Heart right ventricle (tissue), 16 donors: ENCODE measurements at regions of chr17 and their contacts with region 1.

Region 1: DNA sequence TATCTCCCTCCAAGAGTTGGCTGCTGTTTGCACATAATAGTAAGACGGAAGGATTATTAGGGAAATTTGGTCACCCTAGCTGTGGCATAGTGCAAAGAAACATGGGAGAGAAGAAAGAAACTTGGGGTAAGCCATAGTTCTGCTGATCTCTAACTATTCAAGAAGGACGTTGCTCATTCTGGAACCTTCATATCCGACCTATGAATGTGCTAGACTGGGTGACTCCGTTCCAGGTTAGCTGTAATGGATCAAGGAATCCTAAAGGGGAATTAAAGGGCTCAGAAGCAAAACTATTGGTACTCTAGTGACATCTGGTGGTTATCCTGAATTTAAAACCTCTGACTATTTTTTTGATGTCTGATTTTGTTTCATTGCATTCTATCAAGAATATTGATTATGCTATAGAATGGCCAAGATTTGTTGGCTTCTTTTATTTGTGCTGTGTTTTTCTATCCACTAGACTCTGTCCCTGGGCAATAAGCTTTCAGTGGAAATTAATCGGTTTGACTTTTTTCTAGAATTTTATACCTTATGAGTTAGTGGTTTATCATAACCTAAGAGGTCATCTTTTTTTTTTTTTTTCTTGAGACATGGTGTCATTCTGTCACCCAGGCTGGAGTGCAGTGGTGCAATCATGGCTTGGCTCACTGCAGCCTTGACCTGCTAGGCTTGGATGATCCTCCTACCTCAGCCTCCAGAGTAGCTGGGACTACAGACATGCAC is 19.5 kb downstream of the PCTP start:
- DNase-seq: no peak
- ATAC-seq: peak; percentile 44 to 79 (median 66)
- H3K4me3 ChIP-seq: no peak overlapping the region
- H3K27ac ChIP-seq: no peak overlapping the region
- H3K4me1 ChIP-seq: peaks cover 0 to 16% (median 15%) of the 10 kb centered on the region in 9 donors
- H3K27me3 ChIP-seq: no peaks in the 10 kb centered on the region
- CTCF ChIP-seq: peak; percentile 47 to 79 (median 67)

Region 2: DNA sequence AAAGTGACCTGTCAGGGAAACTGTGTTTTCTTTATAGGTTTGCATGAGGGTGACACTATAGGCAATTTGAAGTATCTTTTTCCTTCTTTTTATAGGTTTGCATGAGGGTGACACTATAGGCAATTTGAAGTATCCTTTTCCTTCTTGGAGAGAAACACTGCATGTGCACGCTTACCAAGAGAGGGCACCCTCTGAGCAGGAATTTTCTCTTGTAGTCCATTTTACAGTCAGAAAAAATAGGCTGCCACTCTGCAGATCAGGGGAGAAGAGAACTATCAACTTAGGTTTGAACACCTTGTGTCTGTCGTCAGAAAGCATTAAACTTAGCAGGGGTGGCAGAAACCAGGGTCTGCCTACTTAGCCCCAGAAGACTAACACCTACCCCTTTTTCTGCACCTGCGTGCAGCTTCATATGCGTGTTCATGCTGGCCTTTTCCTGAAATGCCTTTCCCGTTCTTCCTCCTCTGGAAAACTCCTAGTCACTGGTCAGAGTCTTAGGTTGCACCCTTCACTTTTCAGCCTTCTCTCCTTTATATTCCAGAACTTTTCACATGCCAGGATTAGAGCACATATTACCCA is 242.7 kb before region 1 on chr17:
- intact Hi-C with region 1: loop called in 9 of 10 experiments (anchors 1 to 5 kb)
- DNase-seq: peak in 1 of 2 donors; percentile 25
- ATAC-seq: peak in 7 of 8 donors; percentile 54 to 89 (median 83)
- H3K4me3 ChIP-seq: no peak overlapping the region
- H3K27ac ChIP-seq: no peak overlapping the region
- H3K4me1 ChIP-seq: peaks cover 0 to 6% (median 0%) of the 10 kb centered on the region in 9 donors
- H3K27me3 ChIP-seq: peaks cover 0 to 9% (median 0%) of the 10 kb centered on the region in 7 donors
- CTCF ChIP-seq: peak; percentile 14 to 71 (median 60)

Region 3: DNA sequence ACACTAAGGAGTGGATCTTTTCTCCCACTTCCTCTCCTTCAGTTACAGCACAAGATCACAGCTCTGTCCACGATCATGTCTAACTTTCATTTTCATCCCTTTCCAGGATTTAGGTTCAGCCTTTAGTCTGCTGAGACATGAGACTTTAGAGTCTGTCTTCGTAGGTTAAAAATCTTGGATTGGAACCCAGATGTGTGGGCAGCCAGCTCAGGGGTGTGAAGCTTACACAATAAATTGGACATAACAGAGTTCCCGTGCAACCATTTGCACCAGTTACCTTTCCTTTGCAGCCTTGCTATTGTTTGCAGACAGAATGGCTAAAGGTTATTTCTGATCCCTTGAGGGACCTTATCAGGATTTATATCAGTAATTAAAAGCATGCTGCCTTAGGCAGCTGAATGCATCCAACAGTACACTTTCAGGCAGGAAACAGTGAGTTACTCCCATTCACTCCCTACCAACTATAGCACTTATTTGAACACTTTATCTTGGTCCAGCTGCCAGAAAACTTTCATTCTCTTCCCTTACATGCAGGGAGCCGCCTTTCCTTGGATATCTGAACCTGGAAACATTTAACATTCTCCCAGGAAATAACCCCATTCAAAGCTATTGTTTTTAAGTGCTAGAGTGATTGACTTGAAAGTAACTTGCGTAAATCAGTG is 134.9 kb before region 1 on chr17:
- intact Hi-C with region 1: loop called in 2 of 10 experiments (anchors 5 to 10 kb)
- DNase-seq: peak in 1 of 2 donors; percentile 14
- ATAC-seq: peak; percentile 57 to 93 (median 81)
- H3K4me3 ChIP-seq: peak overlapping the region in 4 of 10 donors; percentile 13 to 15 (median 14)
- H3K27ac ChIP-seq: peak overlapping the region in 5 of 10 donors; percentile 3 to 67 (median 31)
- H3K4me1 ChIP-seq: peaks cover 3 to 24% (median 19%) of the 10 kb centered on the region in 9 donors
- H3K27me3 ChIP-seq: peaks cover 0 to 40% (median 0%) of the 10 kb centered on the region in 7 donors
- CTCF ChIP-seq: no peak

Region 4: DNA sequence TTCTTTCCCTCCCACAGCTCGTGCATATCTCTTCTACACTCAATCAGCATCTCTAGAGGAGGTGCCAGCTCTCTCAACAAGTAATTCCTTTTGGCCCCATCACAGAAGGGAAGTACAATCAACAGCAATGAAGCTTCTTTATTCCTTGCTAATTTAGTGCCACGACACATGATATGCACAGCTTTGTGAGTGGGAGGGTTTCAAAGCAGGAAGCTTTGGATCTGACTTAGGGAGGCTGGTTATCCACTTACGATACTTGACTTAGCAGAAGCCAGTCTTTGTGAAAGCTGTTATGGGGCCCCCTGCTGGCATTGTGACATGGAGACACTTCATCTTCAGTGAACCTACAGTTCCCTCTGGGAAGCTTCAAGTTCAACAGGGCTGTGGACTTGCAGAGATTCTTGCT is 128.6 kb before region 1 on chr17:
- intact Hi-C with region 1: loop called in 2 of 10 experiments (anchors 5 to 10 kb)
- DNase-seq: peak; percentile 48 to 75
- ATAC-seq: peak in 7 of 8 donors; percentile 58 to 88 (median 80)
- H3K4me3 ChIP-seq: no peak overlapping the region
- H3K27ac ChIP-seq: no peak overlapping the region
- H3K4me1 ChIP-seq: peaks cover 0 to 12% (median 0%) of the 10 kb centered on the region in 9 donors
- H3K27me3 ChIP-seq: peaks cover 0 to 79% (median 10%) of the 10 kb centered on the region in 7 donors
- CTCF ChIP-seq: peak; percentile 35 to 76 (median 65)

Region 5: DNA sequence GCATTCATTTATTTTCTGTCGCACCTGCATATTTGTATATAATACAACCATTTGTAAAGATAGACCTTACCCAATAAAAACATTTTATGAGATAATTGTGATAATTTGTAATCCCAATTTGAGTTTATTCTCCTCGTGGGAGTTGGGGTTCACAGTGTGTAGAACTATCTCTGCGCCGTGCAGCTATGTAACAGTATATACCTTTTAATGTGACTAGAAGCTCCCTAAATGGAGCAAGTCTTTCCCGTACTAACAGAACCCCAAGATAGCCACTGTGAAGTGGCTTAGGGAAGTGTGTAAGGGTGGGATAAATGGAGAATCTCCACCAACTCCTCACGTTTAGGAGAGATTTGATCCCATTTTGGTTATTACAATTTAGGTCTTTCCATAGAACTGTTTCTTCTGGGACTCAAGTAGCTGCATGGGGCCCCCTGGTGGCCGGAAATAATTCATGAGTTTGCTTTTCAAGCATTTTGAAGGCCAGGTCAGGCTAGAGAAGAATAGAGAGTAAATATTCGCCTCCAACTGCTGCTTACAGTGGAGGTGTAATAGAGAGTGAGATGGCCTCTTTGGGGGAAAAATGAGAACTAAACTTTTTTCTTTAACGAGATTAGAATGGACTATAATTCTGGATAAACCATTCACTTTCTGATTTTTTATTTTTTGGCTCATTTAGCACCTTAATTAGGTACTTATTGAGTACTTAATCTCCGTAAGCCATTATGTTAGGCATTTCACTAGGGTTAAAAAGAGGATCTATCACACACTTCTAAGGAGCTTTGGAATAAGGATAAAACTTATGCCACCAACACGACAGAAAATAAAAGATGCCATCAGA is 52.2 kb before region 1 on chr17:
- intact Hi-C with region 1: loop called in 2 of 10 experiments (anchors 1 to 5 kb)
- DNase-seq: peak; percentile 51 to 81
- ATAC-seq: peak in 6 of 8 donors; percentile 25 to 57 (median 36)
- H3K4me3 ChIP-seq: no peak overlapping the region
- H3K27ac ChIP-seq: no peak overlapping the region
- H3K4me1 ChIP-seq: peaks cover 0 to 15% (median 4%) of the 10 kb centered on the region in 9 donors
- H3K27me3 ChIP-seq: peaks cover 0 to 6% (median 0%) of the 10 kb centered on the region in 7 donors
- CTCF ChIP-seq: peak; percentile 63 to 89 (median 78)

Region 6: DNA sequence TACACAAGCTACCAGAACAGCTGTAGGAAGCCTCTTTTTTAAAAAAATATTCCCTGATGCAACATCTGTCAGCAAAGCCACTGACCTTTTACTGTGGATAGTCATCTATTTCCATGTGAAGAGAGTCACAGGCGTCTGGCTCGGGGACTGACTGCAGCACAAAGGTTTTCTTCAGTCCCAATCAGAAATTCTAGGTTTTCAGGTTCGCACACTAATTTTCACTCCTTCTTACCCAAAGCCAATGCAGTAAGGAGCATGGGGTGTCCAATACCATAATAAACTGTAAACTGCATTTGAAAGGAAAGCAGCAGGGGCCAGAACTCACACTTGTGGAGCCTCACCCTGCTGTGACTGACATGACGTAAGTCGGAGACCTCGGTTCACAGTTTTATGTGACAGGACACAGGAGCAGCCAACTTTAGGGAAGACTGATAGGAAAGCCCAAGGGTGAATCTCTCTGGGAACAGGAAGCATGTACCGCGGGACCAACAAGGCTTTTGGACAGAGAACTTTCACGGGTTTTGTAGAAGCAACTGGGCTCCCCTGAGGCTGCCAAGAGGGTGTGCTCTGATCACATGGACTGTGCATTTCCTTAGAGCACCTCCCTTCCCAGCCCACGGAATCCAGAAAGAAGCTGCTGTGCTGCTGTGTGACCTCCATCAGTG is 38.6 kb before region 1 on chr17:
- intact Hi-C with region 1: loop called in 1 of 10 experiments (anchors 5 kb)
- DNase-seq: peak; percentile 65 to 78
- ATAC-seq: peak; percentile 83 to 94 (median 90)
- H3K4me3 ChIP-seq: peak overlapping the region in 9 of 10 donors; percentile 8 to 46 (median 37)
- H3K27ac ChIP-seq: peak overlapping the region; percentile 62 to 88 (median 84)
- H3K4me1 ChIP-seq: peaks cover 5 to 54% (median 43%) of the 10 kb centered on the region in 9 donors
- H3K27me3 ChIP-seq: no peaks in the 10 kb centered on the region
- CTCF ChIP-seq: no peak

Region 7: DNA sequence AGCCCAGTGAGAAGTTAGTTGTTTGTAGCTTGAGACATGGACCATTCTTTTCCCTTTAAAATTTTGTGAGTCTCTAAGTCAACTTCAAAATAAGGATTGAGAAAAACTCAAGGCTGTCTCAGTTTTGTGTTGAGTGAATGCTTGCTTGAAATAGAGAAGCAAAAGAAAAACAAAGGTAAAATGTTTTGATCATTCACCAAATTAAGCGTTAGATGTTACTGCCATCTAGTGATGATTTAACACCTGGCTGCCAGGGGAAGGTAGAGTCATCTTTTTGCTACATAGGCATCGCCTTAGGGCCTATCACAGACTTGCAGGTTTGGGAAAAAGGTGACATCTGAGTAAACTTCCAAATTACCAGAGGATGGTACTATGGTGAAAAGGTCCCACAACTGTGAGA is 54.9 kb after region 1 on chr17:
- intact Hi-C with region 1: loop called in 1 of 10 experiments (anchors 5 kb)
- DNase-seq: no peak
- ATAC-seq: no peak
- H3K4me3 ChIP-seq: no peak overlapping the region
- H3K27ac ChIP-seq: no peak overlapping the region
- H3K4me1 ChIP-seq: peaks cover 0 to 3% (median 0%) of the 10 kb centered on the region in 9 donors
- H3K27me3 ChIP-seq: no peaks in the 10 kb centered on the region
- CTCF ChIP-seq: peak in 7 of 9 donors; percentile 27 to 55 (median 45)